ENCODE measurements at regions of chr17 and their contacts with region 1.

Region 1: DNA sequence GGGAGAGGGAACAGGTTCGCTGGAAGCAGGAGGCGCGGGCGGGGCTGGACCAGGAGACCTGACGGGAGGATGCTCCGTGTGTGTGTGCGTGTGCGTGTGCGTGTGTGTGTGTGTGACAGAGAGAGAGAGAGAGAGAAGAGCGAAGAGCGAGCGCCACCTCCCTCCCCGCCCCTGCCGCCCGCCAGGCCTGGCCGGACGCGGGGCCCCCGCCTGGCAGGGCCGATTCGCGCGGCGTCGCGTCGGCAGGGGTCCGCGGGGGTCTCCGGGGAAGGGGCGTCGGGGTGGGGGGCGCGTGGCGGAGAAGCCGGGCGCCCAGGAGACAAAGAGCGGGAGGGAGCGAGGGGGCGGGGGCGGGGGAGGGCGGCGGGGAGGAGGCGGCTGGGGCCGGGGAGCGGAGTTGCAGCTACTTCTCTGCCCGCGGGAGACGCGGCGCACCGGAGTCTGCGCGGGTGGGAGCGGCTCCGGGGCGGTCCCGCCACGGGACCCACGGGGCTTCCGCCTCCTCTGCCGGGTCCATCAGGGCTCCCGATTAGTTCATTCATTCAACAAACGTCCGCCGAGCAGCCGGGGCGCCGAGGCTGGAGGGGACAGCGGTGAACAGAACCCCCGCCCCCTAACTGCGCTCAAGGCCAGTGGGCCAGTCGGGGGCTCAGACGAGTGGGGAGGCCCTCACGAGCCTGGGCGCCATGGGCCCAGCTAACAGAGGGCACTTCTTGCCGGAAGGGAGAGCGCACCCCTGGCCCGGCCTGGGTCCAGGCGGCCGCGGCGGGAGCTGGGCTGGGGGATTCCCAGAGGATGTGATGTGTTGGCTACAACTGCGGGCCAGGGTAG is at the start of gene SAMD14:
- DNase-seq: peak; percentile 63
- H3K4me3 Mint-ChIP-seq: peak within 1 kb of the TSS; percentile 68
- H3K27ac Mint-ChIP-seq: peak within 1 kb of the TSS; percentile 18
- H3K4me1 Mint-ChIP-seq: peaks cover 27% of the 10 kb centered on the region
- H3K27me3 Mint-ChIP-seq: peaks cover 10% of the 10 kb centered on the region
- total RNA-seq, gene SAMD14: 3.4 to 3.7 TPM

Region 2: DNA sequence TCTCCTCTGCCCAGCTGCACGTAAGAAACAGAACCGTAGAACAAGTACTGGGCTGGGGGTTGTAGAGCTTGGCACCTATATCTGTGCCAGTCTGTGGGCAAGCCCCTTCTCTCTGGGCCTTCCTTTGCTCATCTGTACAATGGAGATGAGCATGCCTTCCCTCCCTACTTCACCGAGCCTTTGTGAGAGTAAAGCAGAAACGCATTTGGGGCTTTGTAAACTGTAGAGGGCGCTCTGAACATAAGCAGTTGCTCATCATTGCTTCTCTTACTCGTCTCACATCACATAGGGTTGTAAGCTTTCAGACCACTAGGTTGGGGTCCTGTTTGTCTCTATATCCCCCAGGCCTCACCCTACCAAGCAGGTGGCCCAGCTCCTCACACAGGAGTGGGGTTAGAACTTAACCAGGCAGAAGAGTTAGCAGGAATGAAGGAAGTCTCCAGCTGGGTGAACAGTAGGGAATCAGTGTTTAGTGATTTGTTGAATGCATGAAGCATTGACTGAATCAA is 15.0 kb before region 1 on chr17:
- CTCF ChIA-PET with region 1: interaction called, 22 read pairs
- POLR2A ChIA-PET with region 1: interaction called, 3 read pairs
- intact Hi-C with region 1: no loop called
- DNase-seq: peak; percentile 53
- H3K4me3 Mint-ChIP-seq: no peak overlapping the region
- H3K27ac Mint-ChIP-seq: no peak overlapping the region
- H3K4me1 Mint-ChIP-seq: peaks cover 10% of the 10 kb centered on the region
- H3K27me3 Mint-ChIP-seq: peaks cover 24% of the 10 kb centered on the region

Region 3: DNA sequence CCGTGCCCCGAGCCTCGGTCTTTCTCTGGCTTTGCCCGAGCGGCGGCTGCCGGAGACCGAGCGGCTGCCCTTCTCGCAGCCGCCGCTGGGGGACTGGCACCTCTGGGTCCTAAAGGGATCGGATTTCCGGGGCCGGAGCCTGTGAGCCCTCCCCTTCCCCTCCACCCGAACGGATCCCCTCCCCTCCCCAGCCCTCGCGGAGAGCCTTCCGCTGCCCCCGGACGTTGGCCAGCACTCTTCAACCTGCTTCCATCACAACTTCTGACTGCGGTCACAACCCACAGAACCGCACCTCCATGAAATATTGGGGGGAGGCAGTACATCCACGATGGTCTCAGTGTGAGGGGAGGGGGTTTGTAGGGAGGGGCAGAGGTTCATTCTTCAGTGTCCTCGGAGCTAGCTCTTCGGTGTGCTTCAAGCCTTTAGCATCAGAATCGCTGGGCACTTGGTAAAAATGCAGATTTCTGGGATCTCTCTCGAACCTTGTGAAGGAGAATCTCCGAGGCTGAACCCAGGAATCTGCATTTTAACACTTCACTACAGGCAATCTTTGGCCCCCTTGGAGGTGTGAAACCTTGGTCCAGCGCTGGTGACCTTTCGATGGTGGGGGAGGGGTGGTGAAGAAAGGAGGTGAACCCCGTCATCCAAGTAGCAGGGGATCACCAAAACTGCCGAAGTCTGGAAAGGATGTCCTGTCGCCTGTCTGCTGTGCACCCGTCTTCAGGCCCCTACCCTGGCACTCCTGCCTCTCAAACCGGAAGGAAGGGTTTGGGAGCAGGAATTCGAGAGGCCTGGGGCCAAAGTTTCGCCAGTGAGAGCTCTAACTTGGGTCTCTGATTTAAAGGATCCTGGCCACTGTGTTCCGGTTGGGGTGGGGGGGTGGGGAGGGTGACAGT is 21.3 kb after region 1 on chr17:
- CTCF ChIA-PET with region 1: interaction called, 4 read pairs
- POLR2A ChIA-PET with region 1: interaction called, 6 read pairs
- intact Hi-C with region 1: loop called (anchors 2 kb)
- DNase-seq: peak; percentile 94
- H3K4me3 Mint-ChIP-seq: peak overlapping the region; percentile 87
- H3K27ac Mint-ChIP-seq: peak overlapping the region; percentile 97
- H3K4me1 Mint-ChIP-seq: peaks cover 38% of the 10 kb centered on the region
- H3K27me3 Mint-ChIP-seq: no peaks in the 10 kb centered on the region

Region 4: DNA sequence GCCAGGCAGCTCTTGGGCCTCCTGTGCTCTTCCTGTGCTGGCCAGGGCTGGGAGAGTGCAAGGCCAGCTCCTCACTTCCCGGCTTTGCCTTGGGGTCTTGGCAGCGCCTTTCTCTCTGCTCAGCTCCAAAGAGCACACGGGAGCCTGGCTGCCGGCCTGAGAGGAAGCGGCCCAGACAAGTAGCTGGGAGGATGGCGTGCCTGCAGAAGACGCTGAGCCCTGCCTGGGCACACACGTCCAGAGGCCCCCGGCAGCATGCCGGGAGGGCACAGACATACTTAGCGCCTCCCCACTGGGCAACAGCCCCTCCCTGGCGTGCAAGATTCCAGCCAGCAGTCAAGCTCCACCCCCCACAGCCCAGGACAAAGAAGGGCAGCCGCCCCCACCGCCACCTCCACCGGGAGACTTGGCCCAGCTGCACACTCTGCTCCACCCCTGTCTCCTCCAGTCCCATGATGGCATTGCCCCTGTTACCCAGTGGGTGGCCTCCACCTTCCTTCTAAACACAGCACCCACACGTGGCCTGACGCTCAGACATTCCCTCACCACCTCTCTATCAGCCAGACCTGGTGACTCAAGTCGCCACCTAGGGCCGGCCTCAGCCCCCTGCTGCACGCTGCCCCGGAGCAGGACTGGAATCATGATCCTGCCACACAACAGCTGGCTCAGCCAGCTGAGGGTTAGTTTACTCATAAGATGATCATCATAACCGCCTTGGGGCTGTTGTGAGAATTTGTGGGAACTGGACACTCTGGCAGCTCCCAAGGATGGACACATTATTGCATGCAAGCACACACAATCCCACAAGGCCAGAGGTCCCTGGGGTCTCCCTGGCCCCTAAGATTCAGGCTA is 48.3 kb after region 1 on chr17:
- CTCF ChIA-PET with region 1: no interaction called
- POLR2A ChIA-PET with region 1: no interaction called
- intact Hi-C with region 1: no loop called
- DNase-seq: peak; percentile 70
- H3K4me3 Mint-ChIP-seq: no peak overlapping the region
- H3K27ac Mint-ChIP-seq: no peak overlapping the region
- H3K4me1 Mint-ChIP-seq: peaks cover 9% of the 10 kb centered on the region
- H3K27me3 Mint-ChIP-seq: no peaks in the 10 kb centered on the region

Measured in activated CD4-positive, alpha-beta memory T cell treated with anti-CD3 and anti-CD28 coated beads for 36 hours (primary cell).